ENCODE measurements at regions of chr2 and their contacts with region 1.

Region 1: DNA sequence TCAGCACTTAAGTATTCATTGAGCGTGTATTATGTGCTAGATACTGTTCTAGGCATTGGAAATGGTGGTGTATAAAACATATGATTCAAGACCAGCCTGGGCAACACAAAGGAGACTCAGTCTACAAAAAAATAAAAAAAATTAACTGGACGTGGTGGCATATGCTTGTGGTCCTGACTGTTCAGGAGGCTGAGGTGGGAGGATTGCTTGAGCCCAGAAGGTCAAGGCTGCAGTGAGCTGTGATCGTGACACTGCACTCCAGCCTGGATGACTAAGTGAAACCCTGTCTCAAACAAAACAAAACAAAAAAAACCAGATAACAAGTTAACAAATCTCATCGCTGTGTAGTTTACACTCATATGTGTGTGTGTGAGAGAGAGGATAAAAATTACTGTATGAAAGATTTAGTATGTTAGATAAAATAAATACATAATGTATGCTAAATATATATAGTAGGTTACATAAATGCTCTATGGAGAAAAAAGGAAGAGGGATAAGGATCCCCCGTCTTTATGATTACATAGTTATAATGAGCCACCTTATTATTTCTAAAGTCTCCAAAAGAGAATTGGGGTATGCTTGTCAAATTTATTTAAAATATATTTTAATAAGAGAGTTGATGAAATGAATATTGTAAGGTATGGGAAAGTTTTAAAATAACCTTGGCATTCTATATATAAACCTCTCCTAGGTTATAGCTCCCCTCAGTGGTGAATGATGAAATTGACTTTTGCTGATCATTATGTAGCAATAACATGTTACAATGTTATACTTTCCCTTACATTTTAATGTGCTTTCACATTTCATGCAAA is 69.2 kb downstream of the EHBP1 start:
- DNase-seq: peak; percentile 22
- CTCF ChIP-seq: peak; percentile 52

Region 2: GRCh38 chr2:62281663-62282062 is 493.1 kb before region 1 on chr2:
- in situ Hi-C with region 1: no loop called
- DNase-seq: no peak
- CTCF ChIP-seq: no peak

Region 3: GRCh38 chr2:62456721-62457539 is 317.8 kb before region 1 on chr2:
- in situ Hi-C with region 1: loop called (anchors 5 kb)
- DNase-seq: peak; percentile 91
- CTCF ChIP-seq: peak; percentile 96

Region 4: GRCh38 chr2:62956651-62957050 is 181.9 kb after region 1 on chr2:
- in situ Hi-C with region 1: no loop called
- DNase-seq: no peak
- CTCF ChIP-seq: no peak

Region 5: GRCh38 chr2:63049970-63050333 is 275.2 kb after region 1 on chr2:
- in situ Hi-C with region 1: loop called (anchors 25 kb)
- DNase-seq: no peak
- CTCF ChIP-seq: no peak

Region 6: GRCh38 chr2:63488118-63488713 is 713.5 kb after region 1 on chr2:
- in situ Hi-C with region 1: loop called (anchors 25 kb)
- DNase-seq: peak; percentile 17
- CTCF ChIP-seq: peak; percentile 60